HEK293T (cell line): ENCODE measurements at regions of chr1 and their contacts with region 1.

Region 1: DNA sequence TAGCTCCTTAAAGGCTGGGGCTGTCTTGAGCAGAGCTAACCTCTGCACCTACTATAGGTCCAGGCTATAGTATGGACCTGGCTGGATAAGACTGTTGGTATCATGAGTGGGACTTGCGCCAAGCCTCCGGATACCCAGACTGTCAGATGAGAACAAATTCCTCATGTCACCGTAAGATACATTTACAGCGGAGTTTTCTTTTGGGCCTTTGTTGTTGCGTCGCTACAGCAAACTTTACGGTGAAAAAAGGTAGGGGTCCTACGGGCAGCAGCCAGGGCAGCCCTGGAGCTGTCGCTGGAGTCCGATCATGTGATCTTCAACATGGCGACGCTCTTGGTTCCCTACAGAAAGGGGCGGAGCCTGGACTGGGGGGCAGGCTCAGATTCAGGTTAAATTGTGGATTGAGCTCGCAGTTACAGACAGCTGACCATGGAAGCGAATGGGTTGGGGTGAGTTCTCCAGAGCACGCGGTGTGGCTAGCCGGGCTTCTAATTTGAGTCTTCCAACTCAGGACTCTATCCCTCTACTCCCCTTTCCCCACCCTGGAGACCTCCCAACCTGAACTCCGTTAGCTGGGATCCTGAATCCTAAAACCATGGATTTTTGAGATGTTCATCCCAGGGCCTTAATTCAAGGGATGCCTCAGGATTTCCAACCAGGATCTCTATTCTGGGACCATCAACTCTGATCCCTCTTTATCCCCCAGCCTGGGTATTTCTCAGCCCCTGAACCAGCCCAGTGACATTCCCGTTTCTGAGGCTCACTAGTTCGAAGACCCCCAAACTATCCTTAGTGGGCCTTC is at the start of gene UROD:
- DNase-seq: peak; percentile 95

Region 2: GRCh38 chr1:44775078-44775929 is 236.7 kb before region 1 on chr1 and contains the start of gene RPS8:
- CTCF ChIA-PET with region 1: no interaction called
- POLR2A ChIA-PET with region 1: interaction called, 14 read pairs
- DNase-seq: peak; percentile 84

Region 3: GRCh38 chr1:44792783-44793714 is 219.0 kb before region 1 on chr1:
- CTCF ChIA-PET with region 1: interaction called, 7 read pairs
- POLR2A ChIA-PET with region 1: interaction called, 22 read pairs
- DNase-seq: no peak

Region 4: DNA sequence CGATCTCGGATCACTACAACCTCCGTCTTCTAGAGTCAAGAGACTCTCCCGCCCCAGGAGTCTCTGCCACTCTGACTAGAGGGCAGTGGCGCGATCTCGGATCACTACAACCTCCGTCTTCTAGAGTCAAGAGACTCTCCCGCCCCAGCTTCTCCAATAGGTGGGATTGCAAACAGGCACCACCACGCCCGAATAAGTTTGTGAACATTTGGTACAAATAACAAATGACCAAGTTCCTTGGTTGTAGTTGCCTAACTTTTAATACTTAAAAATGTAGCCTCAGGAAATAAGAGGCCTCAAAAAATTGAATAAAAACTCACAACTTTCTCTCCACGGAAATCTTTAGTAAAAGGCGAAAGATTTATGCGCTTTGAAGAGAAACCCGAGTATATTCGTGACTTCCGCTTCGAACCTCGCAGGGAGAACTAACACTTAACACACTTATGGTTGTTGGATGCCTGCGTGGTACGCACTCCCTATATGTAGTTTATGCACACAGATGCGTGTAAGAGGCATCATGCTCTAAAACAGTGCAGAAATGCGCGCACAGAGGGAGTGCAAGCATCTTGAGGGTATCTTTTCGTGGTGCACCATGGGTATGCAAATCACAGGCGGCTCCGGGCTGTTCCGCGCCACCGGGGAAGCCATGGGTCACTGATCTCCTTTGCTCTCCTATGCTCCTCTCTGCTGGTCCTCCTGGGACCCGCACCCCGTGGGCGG is 192.3 kb before region 1 on chr1:
- CTCF ChIA-PET with region 1: interaction called, 3 read pairs
- POLR2A ChIA-PET with region 1: interaction called, 18 read pairs
- DNase-seq: peak; percentile 85

Region 5: DNA sequence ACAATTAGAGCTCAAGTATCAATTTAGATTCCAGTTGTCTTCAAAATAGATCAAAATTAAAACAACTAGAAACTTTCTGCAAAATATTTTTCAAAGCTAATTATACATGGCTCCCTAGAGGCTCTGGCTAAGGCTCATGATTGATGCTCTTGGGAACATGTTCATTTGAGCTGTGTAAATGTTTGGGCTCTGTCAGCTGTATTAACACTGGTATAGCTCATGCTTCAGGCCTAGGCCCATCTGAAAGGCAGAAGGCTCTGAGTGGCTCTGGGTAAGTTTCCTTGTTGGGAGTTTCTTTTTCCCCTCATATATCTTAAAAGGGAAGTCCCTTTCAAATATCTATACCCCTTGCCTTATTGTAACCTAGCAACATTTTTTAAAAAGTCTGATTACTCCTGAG is 81.3 kb after region 1 on chr1:
- CTCF ChIA-PET with region 1: no interaction called
- POLR2A ChIA-PET with region 1: no interaction called
- DNase-seq: no peak

Region 6: DNA sequence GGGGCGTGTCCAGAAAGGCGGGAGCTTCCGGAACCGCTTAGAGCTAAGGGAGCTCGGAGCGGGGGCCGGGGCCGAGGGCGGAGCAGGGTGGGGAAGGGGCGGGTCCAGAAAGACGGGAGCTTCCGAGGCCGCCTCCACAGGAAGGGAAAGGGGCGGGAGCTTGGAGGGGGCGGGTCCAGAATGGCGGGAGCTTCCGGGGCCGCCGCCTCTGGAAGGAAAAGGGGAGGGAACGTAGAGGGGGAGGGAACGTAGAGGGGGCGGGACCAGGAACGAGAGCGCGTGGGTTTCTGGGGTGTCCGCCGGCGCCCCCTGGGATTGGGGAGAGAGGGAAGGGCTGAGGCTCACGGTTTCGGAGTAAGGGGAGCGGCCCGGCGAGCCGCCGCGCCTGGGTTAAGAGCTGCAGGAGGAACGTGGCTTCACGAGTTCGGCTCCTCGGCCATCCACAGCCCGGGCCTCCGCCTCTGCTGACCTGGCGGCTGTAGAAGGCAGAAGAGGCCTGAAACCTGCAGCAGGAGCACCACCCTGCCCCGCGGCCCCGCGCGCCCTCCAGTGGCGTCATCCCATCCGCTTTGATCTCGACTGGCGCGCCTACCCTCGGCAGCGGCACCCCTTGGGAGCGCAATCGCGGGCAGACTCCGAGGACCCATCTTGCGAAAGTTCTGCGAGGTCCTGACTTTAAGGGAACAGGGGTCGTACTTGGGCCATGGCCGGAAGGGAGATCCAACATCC is 291.7 kb after region 1 on chr1:
- CTCF ChIA-PET with region 1: interaction called, 139 read pairs
- POLR2A ChIA-PET with region 1: interaction called, 154 read pairs
- DNase-seq: peak; percentile 97

Region 7: GRCh38 chr1:45490626-45491486 is 478.8 kb after region 1 on chr1 and contains the start of gene TESK2:
- CTCF ChIA-PET with region 1: interaction called, 6 read pairs
- POLR2A ChIA-PET with region 1: interaction called, 14 read pairs
- DNase-seq: peak; percentile 94